CD4-positive, alpha-beta T cell (primary cell): ENCODE measurements at regions of chr1 and their contacts with region 1.

Region 1: DNA sequence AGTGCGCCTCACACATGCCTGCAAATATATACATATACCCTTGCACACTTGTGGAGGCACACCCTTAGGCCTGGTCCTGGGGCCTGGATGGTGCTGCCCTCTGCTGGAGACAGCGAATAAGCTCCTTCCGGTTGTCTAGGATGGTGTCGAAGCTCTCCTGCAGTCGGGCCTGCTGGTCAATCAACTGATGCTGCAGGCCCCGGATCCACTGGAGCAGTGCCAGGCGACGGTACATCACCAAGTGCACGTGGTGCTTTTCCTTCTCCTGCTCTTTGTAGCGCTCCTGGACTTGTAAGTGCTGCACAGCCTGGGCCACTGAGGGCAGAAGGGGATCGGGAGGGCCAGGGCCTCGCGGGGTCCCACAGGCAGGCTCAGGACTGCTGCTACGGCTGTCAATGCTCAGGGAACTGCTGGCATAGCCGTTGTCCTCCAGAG is 3.1 kb downstream of the C1orf216 start:
- DNase-seq: peak; percentile 66 to 87 (median 72)
- ATAC-seq: peak; percentile 72
- H3K4me3 ChIP-seq: no peak overlapping the region
- H3K4me3 Mint-ChIP-seq: peak overlapping the region; percentile 70
- H3K27ac ChIP-seq: no peak overlapping the region
- H3K27ac Mint-ChIP-seq: no peak overlapping the region
- H3K4me1 ChIP-seq: peaks cover 38% of the 10 kb centered on the region
- H3K4me1 Mint-ChIP-seq: peaks cover 33% of the 10 kb centered on the region
- H3K27me3 ChIP-seq: no peaks in the 10 kb centered on the region
- H3K27me3 Mint-ChIP-seq: no peaks in the 10 kb centered on the region
- CTCF ChIP-seq: peak; percentile 92

Region 2: DNA sequence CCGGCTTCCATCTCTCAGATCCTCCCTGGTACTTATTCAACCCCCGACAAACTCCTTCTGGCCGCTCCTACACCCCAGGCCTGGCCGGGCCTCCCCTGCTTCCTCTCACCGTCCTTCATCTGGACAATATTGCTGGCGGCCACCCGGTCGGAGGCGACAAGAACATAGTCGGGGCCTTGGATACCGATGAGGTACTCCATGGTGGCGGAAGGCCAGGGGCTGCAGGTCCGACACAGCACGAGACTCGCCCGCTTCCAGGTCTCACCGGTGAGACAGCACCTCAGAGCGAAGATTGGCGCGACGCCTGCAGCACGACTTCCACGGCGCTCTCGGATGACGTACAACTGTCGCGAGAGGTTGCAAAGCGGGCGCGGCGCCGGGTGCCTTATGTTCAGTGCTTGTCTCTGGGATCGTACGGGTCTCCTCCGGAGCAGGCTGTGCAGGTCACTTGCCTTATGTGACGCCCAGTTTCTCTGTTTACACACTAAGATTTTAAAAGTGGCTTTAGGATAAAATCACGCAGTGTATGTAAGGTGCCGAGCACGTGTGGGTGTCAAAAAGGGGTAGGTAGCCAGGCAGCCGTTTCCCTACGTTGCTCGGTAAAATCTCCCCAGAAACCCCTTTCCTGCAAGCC is 74.2 kb before region 1 on chr1 and contains the start of gene PSMB2:
- CTCF ChIA-PET with region 1: interaction called, 9 read pairs
- POLR2A ChIA-PET with region 1: no interaction called
- intact Hi-C with region 1: loop called (anchors 5 kb)
- DNase-seq: peak; percentile 92 to 98 (median 96)
- ATAC-seq: peak; percentile 89
- H3K4me3 ChIP-seq: peak within 1 kb of the TSS; percentile 83
- H3K4me3 Mint-ChIP-seq: peak within 1 kb of the TSS; percentile 99
- H3K27ac ChIP-seq: peak within 1 kb of the TSS; percentile 63 to 73
- H3K27ac Mint-ChIP-seq: peak within 1 kb of the TSS; percentile 98
- H3K4me1 ChIP-seq: peaks cover 15% of the 10 kb centered on the region
- H3K4me1 Mint-ChIP-seq: peaks cover 47% of the 10 kb centered on the region
- H3K27me3 ChIP-seq: peaks cover 0 to 16% of the 10 kb centered on the region in 2 experiments
- H3K27me3 Mint-ChIP-seq: peaks cover 35% of the 10 kb centered on the region
- CTCF ChIP-seq: no peak
- total RNA-seq, gene PSMB2: 34.0 to 35.3 TPM

Region 3: GRCh38 chr1:35668506-35668905 is 47.1 kb before region 1 on chr1:
- CTCF ChIA-PET with region 1: no interaction called
- POLR2A ChIA-PET with region 1: no interaction called
- intact Hi-C with region 1: no loop called
- DNase-seq: no peak
- ATAC-seq: no peak
- H3K4me3 ChIP-seq: no peak overlapping the region
- H3K4me3 Mint-ChIP-seq: no peak overlapping the region
- H3K27ac ChIP-seq: no peak overlapping the region
- H3K27ac Mint-ChIP-seq: no peak overlapping the region
- H3K4me1 ChIP-seq: no peaks in the 10 kb centered on the region
- H3K4me1 Mint-ChIP-seq: no peaks in the 10 kb centered on the region
- H3K27me3 ChIP-seq: peaks cover 0 to 17% of the 10 kb centered on the region in 2 experiments
- H3K27me3 Mint-ChIP-seq: peaks cover 21% of the 10 kb centered on the region
- CTCF ChIP-seq: no peak

Region 4: DNA sequence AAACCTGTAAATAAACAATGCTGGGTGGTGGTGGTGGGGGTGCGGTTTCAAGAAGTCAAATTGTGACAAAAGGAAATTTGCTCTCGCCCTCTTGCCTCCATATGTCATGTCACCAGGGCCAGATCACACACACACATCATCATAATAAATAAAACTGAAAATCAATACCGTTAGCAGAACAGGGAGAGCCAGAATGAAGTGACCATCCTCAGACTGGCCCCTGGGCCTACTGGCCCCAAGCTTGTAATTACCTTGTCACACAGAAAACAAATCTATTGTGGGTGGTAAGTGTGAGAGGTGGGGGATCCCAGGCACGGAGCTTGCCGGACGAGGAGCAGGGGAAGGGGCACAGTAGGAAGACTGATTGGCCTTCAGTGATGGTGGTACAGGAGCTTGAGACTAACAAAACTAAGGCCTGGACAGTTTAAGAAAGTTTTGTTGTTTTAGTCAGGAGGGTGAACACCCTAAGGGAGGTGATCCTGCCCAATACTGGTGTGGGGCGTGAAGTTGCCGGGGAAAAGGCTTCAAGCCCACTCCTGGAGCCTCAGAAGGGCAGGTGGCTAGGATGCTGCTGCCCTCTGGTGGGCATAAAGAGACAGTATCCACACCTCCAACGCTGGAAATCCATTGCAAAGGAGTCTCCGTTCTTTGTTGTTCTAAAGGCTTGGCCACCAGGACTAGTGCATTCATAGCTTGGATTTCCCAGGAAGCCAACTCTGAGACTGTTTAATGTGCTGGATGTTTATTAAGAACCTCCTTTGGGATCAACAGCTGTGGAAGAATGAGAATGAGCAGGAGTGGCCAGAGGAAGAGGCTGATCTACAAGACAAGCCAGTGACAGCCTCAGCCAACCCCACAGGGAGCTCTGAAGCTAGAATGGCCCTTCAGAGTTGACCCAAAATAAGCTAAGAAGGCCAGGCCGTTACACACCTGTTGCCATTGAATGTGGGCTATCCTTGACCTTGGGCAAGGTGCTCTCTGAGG is 11.2 kb after region 1 on chr1:
- CTCF ChIA-PET with region 1: interaction called, 30 read pairs
- POLR2A ChIA-PET with region 1: interaction called, 8 read pairs
- intact Hi-C with region 1: no loop called
- DNase-seq: peak; percentile 20 to 81 (median 37)
- ATAC-seq: peak; percentile 92
- H3K4me3 ChIP-seq: no peak overlapping the region
- H3K4me3 Mint-ChIP-seq: no peak overlapping the region
- H3K27ac ChIP-seq: no peak overlapping the region
- H3K27ac Mint-ChIP-seq: no peak overlapping the region
- H3K4me1 ChIP-seq: peaks cover 7% of the 10 kb centered on the region
- H3K4me1 Mint-ChIP-seq: peaks cover 7% of the 10 kb centered on the region
- H3K27me3 ChIP-seq: no peaks in the 10 kb centered on the region
- H3K27me3 Mint-ChIP-seq: no peaks in the 10 kb centered on the region
- CTCF ChIP-seq: peak; percentile 83